ENCODE measurements at regions of chr17 and their contacts with region 1.

Region 1: GRCh38 chr17:17041571-17042380 is 481 bp upstream of the MPRIP start:
- DNase-seq: peak; percentile 93
- H3K4me3 Mint-ChIP-seq: peak overlapping the region; percentile 72
- H3K27ac Mint-ChIP-seq: no peak overlapping the region
- H3K4me1 Mint-ChIP-seq: peaks cover 35% of the 10 kb centered on the region
- H3K27me3 Mint-ChIP-seq: no peaks in the 10 kb centered on the region

Region 2: DNA sequence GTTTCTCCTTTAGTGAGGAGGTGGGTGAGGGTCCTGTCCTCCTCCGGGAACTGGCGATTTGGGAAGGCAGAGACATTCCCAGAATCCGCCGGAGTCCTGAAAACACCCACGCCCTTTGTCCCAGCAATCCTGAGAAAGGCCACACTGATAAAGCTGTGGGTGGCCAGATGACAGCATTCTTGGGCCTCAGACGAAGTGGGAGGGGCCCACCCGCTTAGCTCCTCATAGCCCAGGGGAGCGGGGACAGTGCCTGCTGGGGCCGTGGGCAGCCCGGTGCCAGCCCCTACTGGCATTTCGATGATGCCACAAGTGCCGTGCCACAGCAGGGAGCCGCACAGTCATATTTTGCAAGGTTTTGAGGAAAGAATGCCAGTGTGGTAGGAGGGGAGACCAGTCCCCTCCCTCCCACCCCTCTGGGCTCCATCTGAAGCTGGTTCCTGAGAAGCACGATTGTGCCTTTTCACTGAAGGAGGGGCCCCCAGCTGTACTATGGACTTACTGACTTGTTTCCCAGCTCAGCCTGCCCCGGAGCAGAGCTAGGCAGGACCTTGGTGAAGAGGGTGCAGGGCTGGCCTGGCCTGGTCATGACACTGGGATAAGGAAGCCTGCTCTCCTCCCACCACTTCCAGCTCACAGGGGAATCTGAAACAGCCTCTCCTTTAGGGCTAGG is 20.4 kb before region 1 on chr17:
- intact Hi-C with region 1: no loop called
- DNase-seq: no peak
- H3K4me3 Mint-ChIP-seq: no peak overlapping the region
- H3K27ac Mint-ChIP-seq: no peak overlapping the region
- H3K4me1 Mint-ChIP-seq: peaks cover 11% of the 10 kb centered on the region
- H3K27me3 Mint-ChIP-seq: peaks cover 3% of the 10 kb centered on the region

Region 3: GRCh38 chr17:17052462-17053221 is 10.9 kb after region 1 on chr17:
- intact Hi-C with region 1: loop called (anchors 1 kb)
- DNase-seq: no peak
- H3K4me3 Mint-ChIP-seq: no peak overlapping the region
- H3K27ac Mint-ChIP-seq: no peak overlapping the region
- H3K4me1 Mint-ChIP-seq: peaks cover 24% of the 10 kb centered on the region
- H3K27me3 Mint-ChIP-seq: no peaks in the 10 kb centered on the region

Region 4: DNA sequence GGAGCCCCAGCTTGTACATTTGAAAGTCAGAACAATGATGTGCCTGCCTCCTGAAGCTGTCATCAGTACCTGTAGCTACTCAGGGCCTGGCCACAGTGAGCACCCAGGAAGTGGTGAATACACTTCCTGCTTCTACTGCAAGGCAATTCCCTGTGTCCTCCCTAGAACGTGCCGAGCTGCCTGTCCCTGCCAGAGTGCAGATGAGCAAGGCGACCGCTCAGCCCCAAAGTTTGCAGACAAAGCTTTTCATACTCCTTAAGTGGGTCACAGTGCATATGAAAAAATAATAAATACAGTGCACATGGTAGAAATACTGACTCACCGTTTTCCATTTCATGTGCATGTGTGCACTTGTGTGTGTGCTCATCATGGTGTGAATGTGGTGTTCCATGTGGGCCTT is 77.8 kb after region 1 on chr17:
- intact Hi-C with region 1: loop called (anchors 5 kb)
- DNase-seq: peak; percentile 53
- H3K4me3 Mint-ChIP-seq: no peak overlapping the region
- H3K27ac Mint-ChIP-seq: peak overlapping the region; percentile 84
- H3K4me1 Mint-ChIP-seq: peaks cover 48% of the 10 kb centered on the region
- H3K27me3 Mint-ChIP-seq: no peaks in the 10 kb centered on the region

Region 5: DNA sequence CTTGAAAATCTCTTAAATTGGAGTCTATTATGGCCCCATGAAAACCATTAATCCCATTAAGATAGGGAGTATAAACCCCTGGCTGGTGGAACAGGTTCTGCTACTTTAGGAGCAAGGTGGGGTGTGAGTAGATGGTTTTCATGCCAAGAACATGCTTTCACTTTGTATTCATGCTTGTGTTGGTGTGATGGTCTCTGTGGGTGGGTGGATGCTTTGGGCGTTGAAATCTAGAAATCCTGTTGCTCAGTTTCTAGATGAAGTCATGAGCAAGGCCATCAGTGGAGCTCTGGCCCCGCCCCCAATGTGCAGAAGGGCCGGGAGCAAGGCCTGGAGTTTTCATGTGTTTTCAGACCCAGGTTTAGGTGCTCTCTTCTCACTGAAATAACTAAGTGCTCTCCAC is 144.3 kb after region 1 on chr17:
- intact Hi-C with region 1: loop called (anchors 10 kb)
- DNase-seq: peak; percentile 62
- H3K4me3 Mint-ChIP-seq: peak overlapping the region; percentile 67
- H3K27ac Mint-ChIP-seq: peak overlapping the region; percentile 90
- H3K4me1 Mint-ChIP-seq: peaks cover 56% of the 10 kb centered on the region
- H3K27me3 Mint-ChIP-seq: no peaks in the 10 kb centered on the region

Region 6: GRCh38 chr17:17303010-17303846 is 261.5 kb after region 1 on chr17 and contains the start of gene NT5M:
- intact Hi-C with region 1: loop called (anchors 2 kb)
- DNase-seq: peak; percentile 71
- H3K4me3 Mint-ChIP-seq: peak within 1 kb of the TSS; percentile 88
- H3K27ac Mint-ChIP-seq: peak within 1 kb of the TSS; percentile 87
- H3K4me1 Mint-ChIP-seq: peaks cover 38% of the 10 kb centered on the region
- H3K27me3 Mint-ChIP-seq: no peaks in the 10 kb centered on the region
- total RNA-seq, gene NT5M: 8.1 and 9.5 TPM in 2 replicates

Region 7: DNA sequence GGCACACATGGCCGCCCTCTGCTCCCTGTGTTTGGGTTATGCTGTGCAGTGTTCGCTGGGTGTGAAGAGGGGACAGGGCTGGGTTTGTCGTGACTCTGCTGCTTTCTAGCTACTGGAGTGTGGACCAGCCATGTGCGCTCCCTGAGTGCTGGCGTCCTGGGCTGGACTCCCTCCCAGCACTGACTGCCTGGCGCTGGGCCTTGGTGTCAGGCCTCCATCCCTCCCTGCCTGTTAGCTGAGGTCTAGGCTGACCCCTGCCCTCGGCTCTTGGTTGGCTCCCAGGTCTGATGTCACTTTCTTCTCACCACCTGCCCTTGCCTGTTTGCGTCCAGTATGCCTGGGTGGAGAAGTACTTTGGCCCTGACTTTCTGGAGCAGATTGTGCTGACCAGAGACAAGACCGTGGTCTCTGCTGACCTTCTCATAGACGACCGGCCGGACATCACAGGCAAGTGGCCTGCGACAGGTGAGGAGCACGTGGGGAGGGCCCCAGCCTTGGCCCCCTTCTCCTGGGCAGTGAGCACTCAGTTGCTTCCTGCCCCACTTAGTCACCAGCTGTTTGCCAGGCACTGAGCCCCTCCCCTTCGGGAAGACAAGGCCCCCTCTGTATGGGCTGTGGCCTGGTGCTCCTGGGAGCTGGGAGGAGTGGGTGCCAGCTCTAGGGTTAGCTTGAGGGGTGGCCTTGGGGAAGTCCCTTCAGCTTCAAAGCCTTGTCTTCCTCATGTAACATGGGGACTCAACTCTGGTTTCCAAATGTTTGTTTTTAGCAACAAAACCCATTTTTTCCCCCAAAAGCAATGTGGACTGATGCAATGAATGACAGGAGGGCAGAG is 302.9 kb after region 1 on chr17:
- intact Hi-C with region 1: no loop called
- DNase-seq: no peak
- H3K4me3 Mint-ChIP-seq: no peak overlapping the region
- H3K27ac Mint-ChIP-seq: no peak overlapping the region
- H3K4me1 Mint-ChIP-seq: no peaks in the 10 kb centered on the region
- H3K27me3 Mint-ChIP-seq: no peaks in the 10 kb centered on the region